GM10248 (cell line): ENCODE measurements at regions of chr2 and their contacts with region 1.

Region 1: DNA sequence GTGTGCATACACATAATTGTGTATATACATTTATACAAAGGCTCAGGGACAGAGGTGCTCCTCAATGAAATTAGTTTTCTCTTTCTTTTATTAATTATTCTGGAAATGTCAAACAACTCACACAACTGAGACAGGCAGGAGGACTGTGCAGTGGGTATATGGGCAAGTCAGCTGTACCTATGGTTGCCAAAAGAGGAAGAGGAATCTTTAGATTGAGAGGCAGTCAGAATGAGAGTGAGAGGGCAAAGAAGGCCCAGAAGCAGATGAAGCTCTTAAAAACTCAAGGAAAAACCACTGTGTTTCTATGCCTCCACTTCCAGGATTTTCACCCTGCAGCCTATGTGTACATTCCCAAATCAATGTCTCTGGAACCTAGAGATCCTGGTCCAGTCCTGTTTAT is 79.1 kb downstream of the CACNB4 start:
- DNase-seq: no peak
- CTCF ChIP-seq: no peak

Region 2: GRCh38 chr2:152005607-152006006 is 14.1 kb before region 1 on chr2:
- CTCF ChIA-PET with region 1: interaction called, 105 read pairs
- POLR2A ChIA-PET with region 1: no interaction called
- DNase-seq: no peak
- CTCF ChIP-seq: no peak

Region 3: DNA sequence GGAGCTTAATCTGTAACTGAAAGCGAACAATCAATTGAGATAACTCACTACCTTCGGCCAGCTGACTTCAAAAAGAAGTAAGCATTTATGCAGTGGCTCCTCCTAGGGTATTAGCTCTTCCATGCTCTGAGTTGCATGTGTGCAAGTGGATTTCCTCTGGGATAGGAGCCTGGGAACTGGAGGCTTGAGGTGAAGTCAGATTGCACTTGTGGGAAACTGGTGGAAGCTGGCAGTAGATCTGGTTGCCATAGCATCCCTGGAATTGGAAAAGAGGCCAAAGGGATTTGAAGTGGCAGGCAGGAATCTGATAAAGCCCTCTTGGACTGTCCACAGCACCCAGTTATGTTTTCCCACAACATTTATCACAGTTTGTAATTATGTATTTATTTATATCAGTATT is 264.7 kb after region 1 on chr2:
- CTCF ChIA-PET with region 1: no interaction called
- POLR2A ChIA-PET with region 1: no interaction called
- DNase-seq: no peak
- CTCF ChIP-seq: no peak

Region 4: DNA sequence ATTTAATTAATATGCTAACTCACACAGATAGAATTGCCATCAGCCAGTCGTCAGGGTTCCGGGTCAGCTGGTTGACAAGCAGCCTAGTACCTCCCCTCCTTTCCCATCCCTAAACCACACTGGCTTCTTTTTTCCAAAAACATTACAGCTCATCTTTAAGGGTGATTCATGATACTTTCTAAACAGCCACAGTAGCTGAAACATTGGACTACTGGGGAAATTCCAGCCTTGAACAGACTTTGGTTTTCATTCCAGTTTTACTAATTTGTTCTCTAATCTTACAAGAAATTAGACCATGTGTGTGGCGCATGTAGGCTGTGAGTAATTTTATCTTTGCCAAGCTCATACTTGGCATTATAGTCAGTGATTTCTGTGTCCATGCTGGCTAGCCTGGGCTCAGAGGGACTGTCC is 426.1 kb after region 1 on chr2:
- CTCF ChIA-PET with region 1: no interaction called
- POLR2A ChIA-PET with region 1: no interaction called
- DNase-seq: no peak
- CTCF ChIP-seq: no peak